Activated CD8-positive, alpha-beta T cell treated with anti-CD3 and anti-CD28 coated beads for 36 hours (primary cell): ENCODE measurements at regions of chr1 and their contacts with region 1.

Region 1: DNA sequence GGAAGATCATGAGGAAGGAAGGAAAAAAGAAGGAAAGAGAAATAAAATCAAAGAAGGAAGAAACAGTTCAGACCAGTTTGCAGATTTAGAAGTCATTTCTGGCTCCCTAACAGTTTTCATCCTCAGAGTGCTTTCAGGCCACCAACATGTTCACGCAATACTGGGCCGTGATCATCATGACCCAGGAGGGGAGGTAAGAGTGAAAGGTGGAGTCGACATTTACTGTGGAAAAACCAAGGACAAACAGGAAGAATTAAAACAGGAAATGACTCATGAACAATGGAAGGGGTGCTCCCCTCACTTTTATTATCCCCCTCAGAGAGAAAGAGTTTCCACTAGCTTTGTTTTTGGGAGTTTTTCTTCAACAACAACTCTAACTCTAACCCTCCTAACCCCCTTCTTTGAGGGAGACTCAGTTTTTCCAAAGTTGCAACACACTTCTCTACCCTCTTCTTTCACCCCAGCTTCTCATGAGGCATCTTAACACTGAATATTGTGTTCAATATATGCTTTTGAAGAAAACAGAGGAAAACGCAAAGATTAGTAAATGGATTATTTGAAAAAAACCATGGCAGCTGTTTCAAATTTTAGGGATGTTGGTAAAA is 60.4 kb downstream of the VANGL2 start:
- DNase-seq: peak; percentile 63
- ATAC-seq: peak; percentile 72
- H3K4me3 Mint-ChIP-seq: peak overlapping the region; percentile 67
- H3K27ac Mint-ChIP-seq: peak overlapping the region; percentile 98
- H3K4me1 Mint-ChIP-seq: peaks cover 85% of the 10 kb centered on the region
- H3K27me3 Mint-ChIP-seq: no peaks in the 10 kb centered on the region
- CTCF ChIP-seq: no peak

Region 2: DNA sequence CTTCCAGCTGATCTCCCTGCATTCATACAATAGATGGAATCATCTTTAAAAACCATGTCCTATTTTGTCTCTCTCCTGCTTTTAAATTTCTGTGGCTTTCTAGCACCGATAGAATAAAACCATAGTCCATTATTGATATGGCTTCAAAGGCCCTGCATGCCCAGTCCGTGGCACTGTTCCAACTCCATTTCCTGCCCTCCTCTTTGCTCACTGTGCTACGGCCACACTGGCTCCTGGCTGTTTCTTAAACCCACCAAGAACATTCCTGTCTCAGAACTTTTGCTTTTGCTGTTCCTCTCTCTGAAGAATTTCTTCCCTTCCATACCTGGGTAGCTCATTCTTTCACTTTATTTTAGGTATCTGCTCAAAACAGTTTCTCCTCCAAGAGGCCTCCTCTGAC is 178.9 kb after region 1 on chr1:
- CTCF ChIA-PET with region 1: no interaction called
- POLR2A ChIA-PET with region 1: no interaction called
- intact Hi-C with region 1: loop called (anchors 5 kb)
- DNase-seq: no peak
- ATAC-seq: no peak
- H3K4me3 Mint-ChIP-seq: peak overlapping the region; percentile 74
- H3K27ac Mint-ChIP-seq: peak overlapping the region; percentile 98
- H3K4me1 Mint-ChIP-seq: peaks cover 80% of the 10 kb centered on the region
- H3K27me3 Mint-ChIP-seq: no peaks in the 10 kb centered on the region
- CTCF ChIP-seq: no peak